PC-9 (cell line): ENCODE measurements at regions of chr2 and their contacts with region 1.

Region 1: DNA sequence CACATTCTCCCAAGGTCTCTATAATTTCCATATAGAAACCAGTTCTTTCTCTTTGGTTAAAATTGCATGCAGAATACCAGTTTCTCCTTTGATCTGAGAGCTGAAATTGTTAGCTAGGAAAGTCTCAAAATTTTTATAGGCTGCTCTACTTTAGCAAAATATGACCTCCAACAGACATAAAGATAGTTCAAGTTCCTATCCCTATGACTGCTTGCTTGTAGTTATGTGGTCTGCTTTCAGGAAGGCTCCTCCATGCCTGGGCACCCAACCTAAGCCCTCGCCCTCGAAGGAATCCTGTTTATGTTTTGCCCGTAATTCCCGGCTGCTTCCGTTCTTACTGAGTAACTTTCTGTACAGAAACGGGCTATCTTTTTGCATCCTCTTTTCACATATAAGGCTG is 28.0 kb upstream of the LTBP1 start:
- DNase-seq: no peak
- H3K4me3 ChIP-seq: no peak overlapping the region
- H3K27ac ChIP-seq: no peak overlapping the region
- H3K4me1 ChIP-seq: no peaks in the 10 kb centered on the region
- H3K27me3 ChIP-seq: no peaks in the 10 kb centered on the region
- CTCF ChIP-seq: no peak

Region 2: GRCh38 chr2:32874931-32875330 is 43.8 kb before region 1 on chr2:
- CTCF ChIA-PET with region 1: no interaction called
- POLR2A ChIA-PET with region 1: no interaction called
- intact Hi-C with region 1: no loop called
- DNase-seq: no peak
- H3K4me3 ChIP-seq: no peak overlapping the region
- H3K27ac ChIP-seq: no peak overlapping the region
- H3K4me1 ChIP-seq: peaks cover 8% of the 10 kb centered on the region; the same call in 1 of the 2 replicates
- H3K27me3 ChIP-seq: no peaks in the 10 kb centered on the region
- CTCF ChIP-seq: no peak

Region 3: DNA sequence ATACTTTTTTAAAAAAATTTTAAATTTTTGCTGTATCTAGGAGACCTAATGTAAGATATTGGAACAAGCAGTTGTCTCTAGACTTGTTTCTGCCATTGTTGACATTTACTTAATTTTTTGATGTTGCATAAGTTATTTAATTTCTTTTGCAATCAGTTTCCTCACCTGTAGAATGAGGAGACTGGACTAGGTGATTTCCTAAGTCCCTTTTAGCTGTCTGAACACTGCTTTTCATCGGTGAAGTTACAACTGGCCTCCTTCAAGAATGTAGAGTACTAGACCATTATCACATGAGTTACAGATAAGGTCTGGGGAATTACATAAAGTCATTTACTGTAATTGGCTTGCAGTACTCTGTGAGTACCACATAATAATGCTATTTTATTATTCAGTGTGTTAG is 175.5 kb after region 1 on chr2:
- CTCF ChIA-PET with region 1: interaction called, 13 read pairs
- POLR2A ChIA-PET with region 1: no interaction called
- intact Hi-C with region 1: no loop called
- DNase-seq: no peak
- H3K4me3 ChIP-seq: no peak overlapping the region
- H3K27ac ChIP-seq: no peak overlapping the region
- H3K4me1 ChIP-seq: no peaks in the 10 kb centered on the region
- H3K27me3 ChIP-seq: no peaks in the 10 kb centered on the region
- CTCF ChIP-seq: no peak